ENCODE measurements at regions of chr9 and their contacts with region 1.

Region 1: GRCh38 chr9:96644137-96644536 is 11.0 kb downstream of the PRXL2C start:
- DNase-seq: no peak
- H3K4me3 ChIP-seq: no peak overlapping the region
- H3K27ac ChIP-seq: peak overlapping the region in 1 of 4 donors; percentile 44
- H3K4me1 ChIP-seq: peaks cover 0 to 4% (median 0%) of the 10 kb centered on the region in 4 donors
- H3K27me3 ChIP-seq: no peaks in the 10 kb centered on the region
- CTCF ChIP-seq: no peak
- EP300 ChIP-seq: no peak
- POLR2A ChIP-seq: no peak

Region 2: GRCh38 chr9:96449845-96450612 is 194.1 kb before region 1 on chr9 and contains the start of gene HABP4:
- in situ Hi-C with region 1: no loop called
- intact Hi-C with region 1: no loop called
- DNase-seq: peak; percentile 97
- H3K4me3 ChIP-seq: peak within 1 kb of the TSS; percentile 57 to 88 (median 70)
- H3K27ac ChIP-seq: peak within 1 kb of the TSS; percentile 84 to 94 (median 92)
- H3K4me1 ChIP-seq: peaks cover 0 to 20% (median 12%) of the 10 kb centered on the region in 4 donors
- H3K27me3 ChIP-seq: peaks cover 19% of the 10 kb centered on the region
- CTCF ChIP-seq: no peak
- EP300 ChIP-seq: no peak
- POLR2A ChIP-seq: peak; percentile 50
- total RNA-seq, gene HABP4: 1.9 to 11.3 (median 5.0) TPM

Region 3: DNA sequence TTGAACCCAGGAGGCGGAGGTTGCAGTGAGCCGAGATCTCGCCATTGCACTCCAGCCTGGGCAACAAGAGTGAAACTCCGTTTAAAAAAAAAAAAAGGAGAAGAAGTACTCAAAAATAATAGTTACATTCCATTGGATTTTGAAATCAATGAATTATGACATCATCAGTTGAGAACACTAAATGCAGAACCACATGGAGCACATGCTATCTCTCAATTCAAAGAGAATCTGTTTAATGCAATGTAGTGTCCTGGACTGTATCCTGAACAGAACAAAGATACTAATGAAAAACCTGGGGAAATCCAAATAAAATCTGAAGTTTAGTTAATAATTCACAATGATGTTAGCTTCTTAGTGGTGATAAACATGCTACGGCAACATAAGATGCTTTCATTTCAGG is 44.8 kb before region 1 on chr9:
- in situ Hi-C with region 1: no loop called
- intact Hi-C with region 1: no loop called
- DNase-seq: no peak
- H3K4me3 ChIP-seq: no peak overlapping the region
- H3K27ac ChIP-seq: no peak overlapping the region
- H3K4me1 ChIP-seq: no peaks in the 10 kb centered on the region
- H3K27me3 ChIP-seq: no peaks in the 10 kb centered on the region
- CTCF ChIP-seq: no peak
- EP300 ChIP-seq: no peak
- POLR2A ChIP-seq: no peak

Region 4: DNA sequence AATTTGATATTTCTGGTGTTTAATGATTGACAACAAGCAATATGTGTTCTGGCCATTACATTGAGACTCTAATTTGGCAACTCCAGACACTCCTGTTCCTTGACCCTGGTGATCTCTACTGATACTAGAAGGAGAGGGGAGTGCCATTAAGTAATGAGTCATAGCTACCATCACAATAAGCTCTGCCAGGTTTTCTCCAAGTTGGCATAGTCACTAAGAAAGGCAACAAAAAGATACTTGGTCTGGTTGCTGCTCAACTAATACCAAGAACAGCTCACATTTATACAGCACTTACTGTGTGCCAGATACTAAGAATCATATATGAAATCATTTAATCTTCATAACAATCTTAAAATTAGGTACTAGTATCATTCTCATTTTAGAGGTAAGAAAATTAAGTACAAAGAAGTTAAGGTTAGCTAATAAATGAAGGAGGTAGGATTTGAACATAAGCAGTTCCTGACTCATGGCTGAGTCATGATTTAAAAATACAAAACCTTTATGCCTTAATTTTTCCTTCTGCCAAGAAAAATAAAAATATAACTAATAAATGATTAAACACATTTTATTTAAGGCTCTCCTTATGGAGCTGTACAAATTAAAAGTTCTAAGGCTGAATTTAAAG is 30.9 kb after region 1 on chr9:
- in situ Hi-C with region 1: no loop called
- intact Hi-C with region 1: loop called (anchors 1 kb)
- DNase-seq: no peak
- H3K4me3 ChIP-seq: no peak overlapping the region
- H3K27ac ChIP-seq: no peak overlapping the region
- H3K4me1 ChIP-seq: no peaks in the 10 kb centered on the region
- H3K27me3 ChIP-seq: no peaks in the 10 kb centered on the region
- CTCF ChIP-seq: no peak
- EP300 ChIP-seq: no peak
- POLR2A ChIP-seq: no peak

Region 5: DNA sequence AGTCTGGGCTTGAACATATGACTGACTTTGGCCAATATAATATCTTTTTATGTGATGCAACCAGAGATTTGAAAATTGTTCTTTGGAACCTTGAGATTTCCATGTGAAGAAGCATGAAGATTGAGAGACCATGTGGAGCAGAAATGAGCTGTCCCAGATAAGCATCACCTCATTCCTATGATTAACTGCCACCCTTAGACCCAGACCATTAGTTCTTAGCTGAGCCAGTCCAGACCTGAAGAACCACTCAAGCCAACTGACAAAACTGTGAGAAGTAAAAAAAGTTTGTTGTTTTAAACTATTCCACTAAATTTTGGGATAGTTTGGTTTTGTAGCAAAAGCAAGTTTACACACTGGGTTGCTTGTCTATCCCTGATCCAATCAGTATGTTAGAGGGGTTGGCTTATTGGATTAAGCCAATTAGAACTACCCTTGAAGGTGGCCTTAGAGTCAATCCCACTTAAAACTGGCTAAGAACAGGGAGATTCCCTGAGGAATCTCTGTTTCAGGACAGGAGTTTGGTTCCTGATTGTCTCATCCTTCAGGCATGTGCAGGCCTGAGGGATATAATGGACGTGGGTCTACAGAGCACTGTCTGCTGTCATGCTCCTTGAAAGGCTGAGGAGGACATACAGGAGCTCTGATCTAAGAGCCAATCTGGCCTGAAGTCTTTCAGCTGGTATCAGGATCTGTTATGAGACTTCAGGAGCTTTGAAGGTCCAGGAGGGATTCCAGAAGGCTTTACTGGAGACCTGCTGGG is 47.0 kb after region 1 on chr9:
- in situ Hi-C with region 1: no loop called
- intact Hi-C with region 1: no loop called
- DNase-seq: no peak
- H3K4me3 ChIP-seq: no peak overlapping the region
- H3K27ac ChIP-seq: no peak overlapping the region
- H3K4me1 ChIP-seq: peaks cover 0 to 4% (median 0%) of the 10 kb centered on the region in 4 donors
- H3K27me3 ChIP-seq: no peaks in the 10 kb centered on the region
- CTCF ChIP-seq: no peak
- EP300 ChIP-seq: no peak
- POLR2A ChIP-seq: no peak

Measured in transverse colon (tissue), 4 donors.